T-cell (primary cell): ENCODE measurements at regions of chr10 and their contacts with region 1.

Region 1: DNA sequence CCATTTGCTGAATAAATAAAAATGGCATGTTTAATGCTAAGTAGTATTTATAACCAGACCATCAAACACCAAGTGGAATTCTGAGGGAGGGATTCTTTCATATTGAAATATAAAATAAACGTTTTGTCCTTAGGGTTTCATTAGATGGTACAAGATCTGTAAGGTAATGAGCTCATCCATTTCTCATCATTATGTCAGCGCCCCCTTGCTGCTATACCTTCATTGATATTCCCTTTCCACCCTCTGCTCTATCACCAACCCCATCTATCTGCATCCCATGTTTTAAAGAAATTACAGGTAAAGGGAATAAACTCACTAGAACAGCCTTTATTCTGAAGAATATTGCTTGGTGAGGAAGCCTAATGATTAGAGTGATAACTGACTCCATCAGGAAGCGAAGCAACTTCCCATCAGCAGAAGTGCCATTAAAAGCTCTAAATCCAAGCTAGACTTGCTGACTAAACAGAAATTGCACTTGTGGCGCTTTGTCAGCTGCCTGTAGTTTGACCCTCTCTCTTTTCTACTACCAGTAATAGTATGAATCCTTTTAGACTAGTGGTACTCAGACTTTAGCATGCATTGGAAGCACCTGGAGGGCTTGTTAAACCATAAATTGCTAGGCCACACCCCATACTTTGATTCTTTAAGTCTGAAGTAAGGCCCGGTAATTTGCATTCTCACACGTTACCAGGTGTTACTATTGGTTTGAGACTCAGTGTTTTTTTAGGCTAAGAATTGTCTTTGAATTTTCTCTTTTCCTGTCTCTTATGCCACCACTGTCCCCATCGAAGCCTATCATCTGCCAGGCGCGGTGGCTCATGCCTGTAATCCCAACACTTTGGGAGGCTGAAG is 27.5 kb downstream of the ADD3 start:
- DNase-seq: peak in 1 of 35 experiments; percentile 22
- ATAC-seq: no peak
- H3K4me3 ChIP-seq: no peak overlapping the region
- H3K4me3 Mint-ChIP-seq: peak overlapping the region in 1 of 3 donors; percentile 33
- H3K27ac ChIP-seq: no peak overlapping the region
- H3K27ac Mint-ChIP-seq: peak overlapping the region; percentile 44 to 69
- H3K4me1 ChIP-seq: peaks cover 32 to 43% of the 10 kb centered on the region in 2 experiments
- H3K4me1 Mint-ChIP-seq: peaks cover 90 to 93% (median 90%) of the 10 kb centered on the region in 3 donors
- H3K27me3 ChIP-seq: no peaks in the 10 kb centered on the region
- H3K27me3 Mint-ChIP-seq: no peaks in the 10 kb centered on the region

Region 2: GRCh38 chr10:110061687-110062086 is 26.4 kb after region 1 on chr10:
- CTCF ChIA-PET with region 1: no interaction called
- POLR2A ChIA-PET with region 1: no interaction called
- DNase-seq: no peak
- ATAC-seq: no peak
- H3K4me3 ChIP-seq: no peak overlapping the region
- H3K4me3 Mint-ChIP-seq: peak overlapping the region in 1 of 3 donors; percentile 86
- H3K27ac ChIP-seq: no peak overlapping the region
- H3K27ac Mint-ChIP-seq: peak overlapping the region; percentile 79
- H3K4me1 ChIP-seq: peaks cover 31 to 62% of the 10 kb centered on the region in 2 experiments
- H3K4me1 Mint-ChIP-seq: peaks cover 88 to 93% (median 89%) of the 10 kb centered on the region in 3 donors
- H3K27me3 ChIP-seq: no peaks in the 10 kb centered on the region
- H3K27me3 Mint-ChIP-seq: no peaks in the 10 kb centered on the region

Region 3: DNA sequence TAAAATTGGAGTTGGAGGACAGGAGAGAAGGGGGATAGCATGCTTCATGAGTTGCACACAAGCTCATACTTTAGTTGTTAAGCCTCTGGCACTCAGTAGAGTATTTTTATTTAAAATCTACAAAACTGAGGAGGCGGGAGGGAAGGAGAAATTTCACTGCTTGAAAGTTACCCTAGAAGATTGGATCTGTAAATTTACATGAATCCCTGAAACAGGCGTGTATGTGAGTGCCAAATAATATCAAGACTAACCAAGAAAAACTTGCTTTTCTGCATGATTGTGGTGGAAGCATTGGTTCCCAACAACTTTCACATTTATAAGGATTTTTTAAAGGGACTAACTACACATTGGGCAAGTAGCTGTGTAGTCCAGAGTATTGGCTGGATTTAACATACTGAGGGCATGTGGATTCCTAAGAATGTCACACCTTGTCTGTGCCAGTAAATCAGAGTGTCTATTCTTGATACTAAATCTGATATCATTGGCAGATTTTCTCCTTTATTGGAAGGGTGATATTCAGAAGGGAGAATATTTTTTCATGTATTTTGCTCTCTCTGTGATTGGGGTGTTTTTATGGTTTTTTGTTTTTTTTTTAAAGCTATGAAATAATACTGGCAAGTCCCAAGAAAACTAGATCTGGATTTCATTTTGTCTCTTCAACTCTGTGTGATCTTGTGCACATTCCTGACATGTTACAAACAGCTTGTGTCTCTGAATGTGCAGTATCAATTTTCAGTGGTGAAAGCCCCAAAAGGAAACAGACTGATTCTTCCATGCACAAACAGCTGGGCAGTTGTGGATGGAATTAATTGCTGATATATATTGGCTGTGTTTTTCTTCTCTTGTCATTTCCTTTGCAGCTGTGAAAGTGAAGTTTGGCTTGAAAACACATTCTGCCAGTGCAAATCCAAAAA is 39.7 kb after region 1 on chr10:
- CTCF ChIA-PET with region 1: interaction called, 3 to 12 read pairs
- POLR2A ChIA-PET with region 1: no interaction called
- DNase-seq: no peak
- ATAC-seq: no peak
- H3K4me3 ChIP-seq: no peak overlapping the region
- H3K4me3 Mint-ChIP-seq: peak overlapping the region in 2 of 3 donors; percentile 44 to 56
- H3K27ac ChIP-seq: peak overlapping the region; percentile 31
- H3K27ac Mint-ChIP-seq: peak overlapping the region; percentile 89 to 91
- H3K4me1 ChIP-seq: peaks cover 59 to 74% of the 10 kb centered on the region in 2 experiments
- H3K4me1 Mint-ChIP-seq: peaks cover 87 to 97% (median 91%) of the 10 kb centered on the region in 3 donors
- H3K27me3 ChIP-seq: no peaks in the 10 kb centered on the region
- H3K27me3 Mint-ChIP-seq: no peaks in the 10 kb centered on the region